ENCODE measurements at regions of chr4 and their contacts with region 1.

Region 1: DNA sequence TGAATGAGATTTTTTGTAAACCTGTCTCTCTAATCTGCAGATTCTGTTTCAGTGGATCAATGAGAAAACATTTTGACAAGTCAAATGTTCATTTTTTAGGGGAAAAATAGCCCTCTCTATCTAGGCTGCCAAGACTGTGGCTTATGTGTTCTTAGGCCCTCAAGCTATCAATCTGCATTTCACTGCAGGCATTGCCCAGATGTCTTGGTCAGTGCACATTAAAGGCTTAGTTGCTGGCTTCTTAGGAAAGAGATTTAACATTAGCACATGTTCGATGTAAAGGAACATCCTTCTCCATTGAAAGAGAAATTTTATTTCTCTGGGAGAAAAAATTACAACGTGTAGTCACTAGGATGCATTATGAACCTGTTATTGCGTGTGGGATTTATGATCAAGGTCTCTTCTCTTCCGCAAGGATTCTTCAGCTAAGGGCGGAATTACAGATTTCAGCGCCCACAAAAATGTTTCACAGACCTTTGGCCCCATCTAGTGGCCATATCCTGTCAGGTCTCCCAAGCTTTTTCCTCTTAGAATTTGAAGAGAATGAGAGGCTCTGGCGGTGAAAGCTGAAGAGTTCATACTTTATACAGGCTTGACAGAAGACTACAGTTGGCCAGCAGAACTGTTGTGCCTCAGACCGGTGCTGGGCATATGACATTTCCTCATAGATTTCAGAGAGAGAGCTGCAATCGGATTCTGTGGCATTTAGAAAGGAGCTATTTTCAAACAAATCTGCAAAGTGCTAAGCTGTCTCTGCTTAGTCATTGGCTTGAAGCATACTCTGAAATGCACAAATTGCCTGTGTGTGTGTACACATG is 144.6 kb upstream of the NOCT start:
- DNase-seq: peak; percentile 78
- ATAC-seq: peak; percentile 63
- H3K4me3 ChIP-seq: no peak overlapping the region
- H3K27ac ChIP-seq: no peak overlapping the region
- H3K4me1 ChIP-seq: peaks cover 14% of the 10 kb centered on the region
- H3K27me3 ChIP-seq: peaks cover 6% of the 10 kb centered on the region; the same call in 1 of the 2 replicates
- CTCF ChIP-seq: peak; percentile 87
- POLR2A ChIP-seq: no peak
- RAD21 ChIP-seq: peak; percentile 88

Region 2: DNA sequence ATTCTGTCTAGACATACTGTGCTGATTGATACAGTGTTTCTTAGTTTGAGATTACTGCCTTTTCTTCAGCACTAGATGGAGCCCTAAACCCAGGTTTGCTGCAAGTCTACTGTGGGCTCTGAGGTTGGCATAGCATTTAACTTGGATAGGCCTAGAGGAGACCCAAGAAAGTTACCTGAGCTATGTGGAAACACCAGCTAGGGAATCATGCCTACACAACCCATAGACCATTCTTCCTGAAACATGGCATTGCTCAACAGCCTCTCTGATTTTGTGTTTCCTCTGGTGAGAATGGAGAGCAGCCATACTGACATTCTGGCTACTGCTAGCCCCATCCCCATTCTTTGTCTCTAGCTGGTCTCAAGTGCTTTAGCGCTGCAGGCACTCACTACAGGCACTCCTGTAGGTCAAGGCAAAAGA is 1051.0 kb before region 1 on chr4:
- CTCF ChIA-PET with region 1: interaction called, 3 read pairs
- POLR2A ChIA-PET with region 1: no interaction called
- dilution Hi-C with region 1: no loop called
- in situ Hi-C with region 1: no loop called
- intact Hi-C with region 1: loop called (anchors 2 kb)
- DNase-seq: peak; percentile 65
- ATAC-seq: peak; percentile 91
- H3K4me3 ChIP-seq: no peak overlapping the region
- H3K27ac ChIP-seq: no peak overlapping the region
- H3K4me1 ChIP-seq: no peaks in the 10 kb centered on the region
- H3K27me3 ChIP-seq: no peaks in the 10 kb centered on the region
- CTCF ChIP-seq: peak; percentile 74
- POLR2A ChIP-seq: no peak
- RAD21 ChIP-seq: peak; percentile 88

Region 3: GRCh38 chr4:138090150-138090917 is 780.6 kb before region 1 on chr4:
- CTCF ChIA-PET with region 1: interaction called, 3 read pairs
- POLR2A ChIA-PET with region 1: no interaction called
- dilution Hi-C with region 1: no loop called
- in situ Hi-C with region 1: no loop called
- intact Hi-C with region 1: loop called (anchors 5 kb)
- DNase-seq: peak; percentile 83
- ATAC-seq: peak; percentile 96
- H3K4me3 ChIP-seq: peak overlapping the region; percentile 34
- H3K27ac ChIP-seq: peak overlapping the region; percentile 57
- H3K4me1 ChIP-seq: 0 out of 2 replicates have a peak, but pooled peaks cover 2% of the 10 kb centered on the region
- H3K27me3 ChIP-seq: no peaks in the 10 kb centered on the region
- CTCF ChIP-seq: peak; percentile 87
- POLR2A ChIP-seq: no peak
- RAD21 ChIP-seq: peak; percentile 93

Region 4: DNA sequence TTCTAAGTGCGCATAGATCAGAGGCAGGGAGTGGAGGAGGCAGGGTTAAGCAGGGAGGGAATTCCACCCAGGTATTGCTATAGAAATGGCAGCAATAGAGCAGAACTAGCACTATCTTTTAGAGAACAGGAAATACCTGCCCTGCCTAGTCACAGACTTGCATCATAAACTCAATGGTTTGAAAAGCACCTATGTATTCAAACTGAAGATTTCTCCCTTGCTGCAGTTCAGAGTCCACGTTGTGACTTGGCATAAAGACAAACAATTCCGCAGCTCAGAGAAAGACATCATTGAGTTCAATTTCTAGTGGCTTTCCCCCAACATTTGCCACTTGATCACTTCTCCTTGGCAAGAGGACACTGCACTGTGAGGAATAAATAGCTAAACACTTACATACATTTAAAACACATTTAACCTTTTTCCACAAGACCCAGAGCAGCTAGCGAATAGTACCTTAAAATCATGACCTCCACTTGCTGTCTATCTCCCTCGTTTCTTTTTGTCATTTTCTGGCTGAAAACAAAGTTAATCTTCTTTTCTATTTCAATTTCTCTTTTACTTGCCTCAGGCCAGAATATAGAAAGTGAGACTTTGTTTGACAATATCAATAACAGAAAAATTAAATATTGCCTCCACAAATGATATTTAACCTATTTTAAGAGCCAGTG is 671.2 kb before region 1 on chr4:
- CTCF ChIA-PET with region 1: no interaction called
- POLR2A ChIA-PET with region 1: no interaction called
- dilution Hi-C with region 1: no loop called
- in situ Hi-C with region 1: loop called (anchors 25 kb)
- intact Hi-C with region 1: no loop called
- DNase-seq: peak; percentile 33
- ATAC-seq: no peak
- H3K4me3 ChIP-seq: no peak overlapping the region
- H3K27ac ChIP-seq: no peak overlapping the region
- H3K4me1 ChIP-seq: peaks cover 4% of the 10 kb centered on the region; the same call in 1 of the 2 replicates
- H3K27me3 ChIP-seq: no peaks in the 10 kb centered on the region
- CTCF ChIP-seq: no peak
- POLR2A ChIP-seq: no peak
- RAD21 ChIP-seq: no peak

Region 5: DNA sequence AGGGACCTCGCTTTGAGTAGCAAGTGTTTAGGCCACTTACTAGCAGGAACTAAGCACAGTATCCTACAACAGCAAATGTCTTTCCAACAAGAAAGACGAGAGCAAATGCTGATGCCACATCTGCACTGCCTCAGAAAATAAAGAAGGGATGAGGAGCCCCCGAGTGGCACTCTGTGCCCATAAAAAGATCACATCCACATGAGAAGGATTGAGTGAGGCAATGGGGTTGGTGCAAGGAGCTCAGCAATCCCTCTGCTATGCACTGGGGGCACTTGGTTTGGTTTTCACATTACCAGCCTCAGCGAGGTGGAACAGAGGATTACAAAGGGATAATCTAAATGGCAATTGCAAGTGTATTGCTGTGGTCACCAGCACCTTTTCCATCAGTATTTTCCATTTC is 376.0 kb before region 1 on chr4:
- CTCF ChIA-PET with region 1: interaction called, 4 read pairs
- POLR2A ChIA-PET with region 1: no interaction called
- dilution Hi-C with region 1: no loop called
- in situ Hi-C with region 1: no loop called
- intact Hi-C with region 1: loop called (anchors 10 kb)
- DNase-seq: peak; percentile 46
- ATAC-seq: peak; percentile 97
- H3K4me3 ChIP-seq: no peak overlapping the region
- H3K27ac ChIP-seq: no peak overlapping the region
- H3K4me1 ChIP-seq: no peaks in the 10 kb centered on the region
- H3K27me3 ChIP-seq: no peaks in the 10 kb centered on the region
- CTCF ChIP-seq: peak; percentile 44
- POLR2A ChIP-seq: no peak
- RAD21 ChIP-seq: peak; percentile 52

Region 6: DNA sequence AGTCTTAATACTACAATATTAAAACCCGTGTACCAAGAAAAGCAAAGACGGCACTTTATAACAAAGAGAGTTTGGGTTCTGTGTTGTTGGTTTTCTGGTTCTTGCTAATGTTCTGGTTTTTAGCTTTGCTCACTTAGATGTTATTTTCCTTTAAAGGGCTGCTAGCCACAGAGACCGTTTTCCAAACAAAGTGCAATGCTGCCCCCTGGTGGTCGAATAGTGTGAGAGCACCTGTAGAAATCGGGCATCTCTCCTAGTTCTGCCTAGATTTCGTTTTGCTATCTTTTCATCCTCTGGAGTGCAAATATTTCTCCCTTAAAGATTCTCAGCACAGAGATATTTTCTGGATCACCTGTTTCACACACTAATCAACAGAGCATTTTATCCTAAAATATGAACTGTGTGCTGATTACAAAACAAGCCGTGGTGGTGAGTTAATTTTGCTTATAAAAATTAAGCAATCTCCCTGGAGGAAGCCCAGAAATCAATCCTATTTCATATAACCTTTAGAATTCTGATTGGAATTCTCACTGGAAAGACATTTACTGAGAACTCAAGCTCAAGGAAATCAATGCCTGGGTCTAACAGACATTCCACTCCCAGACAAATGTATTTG is 189.8 kb before region 1 on chr4:
- CTCF ChIA-PET with region 1: interaction called, 17 read pairs
- POLR2A ChIA-PET with region 1: no interaction called
- dilution Hi-C with region 1: no loop called
- in situ Hi-C with region 1: no loop called
- intact Hi-C with region 1: loop called (anchors 1 kb)
- DNase-seq: peak; percentile 79
- ATAC-seq: peak; percentile 87
- H3K4me3 ChIP-seq: no peak overlapping the region
- H3K27ac ChIP-seq: no peak overlapping the region
- H3K4me1 ChIP-seq: peaks cover 3% of the 10 kb centered on the region; the same call in 1 of the 2 replicates
- H3K27me3 ChIP-seq: no peaks in the 10 kb centered on the region
- CTCF ChIP-seq: peak; percentile 91
- POLR2A ChIP-seq: peak; percentile 36; the same call in 1 of the 2 replicates
- RAD21 ChIP-seq: peak; percentile 97

Region 7: DNA sequence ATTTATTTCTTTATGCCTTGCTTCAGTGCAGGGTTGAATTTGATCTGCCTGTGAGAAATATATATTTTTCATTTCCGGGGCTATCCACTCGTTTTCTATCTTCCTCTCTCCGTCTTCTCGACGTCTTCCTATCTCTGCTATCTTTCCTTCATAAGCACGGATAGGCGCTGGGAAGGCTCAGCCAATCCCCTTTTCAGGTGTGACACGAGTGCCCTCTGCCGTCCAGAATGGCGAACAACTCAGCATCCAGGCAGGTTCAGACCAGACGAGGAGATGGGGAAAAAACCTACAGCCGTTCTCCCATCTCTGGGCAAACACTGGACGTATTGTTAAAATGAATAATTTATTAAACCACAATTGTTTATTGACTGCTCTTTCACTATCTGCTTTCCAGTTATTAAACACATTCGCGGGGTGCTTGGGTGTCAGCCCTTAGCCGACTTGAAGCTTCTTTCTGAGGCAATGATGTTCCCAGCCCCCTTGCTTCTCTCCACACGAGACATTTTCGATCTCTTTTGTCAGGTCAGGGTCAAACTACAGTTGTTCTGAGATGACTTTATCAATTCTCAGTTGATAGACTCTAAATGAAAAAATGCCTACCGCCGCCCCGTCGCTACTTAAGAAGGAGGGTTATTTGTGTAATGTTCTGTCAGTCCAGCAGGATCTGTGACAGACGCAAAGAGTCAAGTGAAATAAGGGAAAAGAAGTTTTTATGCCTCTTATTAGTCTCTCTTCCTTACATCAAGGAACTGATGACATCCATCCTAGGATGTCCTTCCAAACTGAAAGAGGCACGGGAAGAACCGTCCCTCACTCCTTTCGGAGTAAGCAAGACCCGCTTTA is 48.4 kb after region 1 on chr4:
- CTCF ChIA-PET with region 1: interaction called, 4 read pairs
- POLR2A ChIA-PET with region 1: no interaction called
- dilution Hi-C with region 1: no loop called
- in situ Hi-C with region 1: no loop called
- intact Hi-C with region 1: loop called (anchors 1 kb)
- DNase-seq: peak; percentile 82
- ATAC-seq: peak; percentile 100
- H3K4me3 ChIP-seq: no peak overlapping the region
- H3K27ac ChIP-seq: no peak overlapping the region
- H3K4me1 ChIP-seq: no peaks in the 10 kb centered on the region
- H3K27me3 ChIP-seq: peaks cover 2% of the 10 kb centered on the region; the same call in 1 of the 2 replicates
- CTCF ChIP-seq: peak; percentile 84
- POLR2A ChIP-seq: 0 out of 2 replicates have a peak, but pooled peaks have one; percentile 25
- RAD21 ChIP-seq: peak; percentile 93

Measured in IMR-90 (cell line).